ENCODE measurements at regions of chr12 and their contacts with region 1.

Region 1: GRCh38 chr12:62603061-62603810 is 136.6 kb downstream of the MON2 start:
- DNase-seq: peak; percentile 72
- H3K4me3 ChIP-seq: peak overlapping the region; percentile 91
- H3K27ac ChIP-seq: peak overlapping the region; percentile 100
- H3K27me3 ChIP-seq: no peaks in the 10 kb centered on the region
- CTCF ChIP-seq: peak; percentile 56

Region 2: GRCh38 chr12:62466594-62467491 is 136.4 kb before region 1 on chr12 and contains the start of gene MON2:
- CTCF ChIA-PET with region 1: no interaction called
- POLR2A ChIA-PET with region 1: interaction called, 11 read pairs
- DNase-seq: peak; percentile 29
- H3K4me3 ChIP-seq: peak within 1 kb of the TSS; percentile 99
- H3K27ac ChIP-seq: peak within 1 kb of the TSS; percentile 86
- H3K27me3 ChIP-seq: no peaks in the 10 kb centered on the region
- CTCF ChIP-seq: no peak
- polyA plus RNA-seq, gene MON2: 24.2 and 25.4 TPM in 2 replicates

Region 3: GRCh38 chr12:62581288-62582064 is 21.8 kb before region 1 on chr12:
- CTCF ChIA-PET with region 1: interaction called, 11 read pairs
- POLR2A ChIA-PET with region 1: interaction called, 7 read pairs
- DNase-seq: peak; percentile 20
- H3K4me3 ChIP-seq: no peak overlapping the region
- H3K27ac ChIP-seq: no peak overlapping the region
- H3K27me3 ChIP-seq: no peaks in the 10 kb centered on the region
- CTCF ChIP-seq: peak; percentile 77

Region 4: DNA sequence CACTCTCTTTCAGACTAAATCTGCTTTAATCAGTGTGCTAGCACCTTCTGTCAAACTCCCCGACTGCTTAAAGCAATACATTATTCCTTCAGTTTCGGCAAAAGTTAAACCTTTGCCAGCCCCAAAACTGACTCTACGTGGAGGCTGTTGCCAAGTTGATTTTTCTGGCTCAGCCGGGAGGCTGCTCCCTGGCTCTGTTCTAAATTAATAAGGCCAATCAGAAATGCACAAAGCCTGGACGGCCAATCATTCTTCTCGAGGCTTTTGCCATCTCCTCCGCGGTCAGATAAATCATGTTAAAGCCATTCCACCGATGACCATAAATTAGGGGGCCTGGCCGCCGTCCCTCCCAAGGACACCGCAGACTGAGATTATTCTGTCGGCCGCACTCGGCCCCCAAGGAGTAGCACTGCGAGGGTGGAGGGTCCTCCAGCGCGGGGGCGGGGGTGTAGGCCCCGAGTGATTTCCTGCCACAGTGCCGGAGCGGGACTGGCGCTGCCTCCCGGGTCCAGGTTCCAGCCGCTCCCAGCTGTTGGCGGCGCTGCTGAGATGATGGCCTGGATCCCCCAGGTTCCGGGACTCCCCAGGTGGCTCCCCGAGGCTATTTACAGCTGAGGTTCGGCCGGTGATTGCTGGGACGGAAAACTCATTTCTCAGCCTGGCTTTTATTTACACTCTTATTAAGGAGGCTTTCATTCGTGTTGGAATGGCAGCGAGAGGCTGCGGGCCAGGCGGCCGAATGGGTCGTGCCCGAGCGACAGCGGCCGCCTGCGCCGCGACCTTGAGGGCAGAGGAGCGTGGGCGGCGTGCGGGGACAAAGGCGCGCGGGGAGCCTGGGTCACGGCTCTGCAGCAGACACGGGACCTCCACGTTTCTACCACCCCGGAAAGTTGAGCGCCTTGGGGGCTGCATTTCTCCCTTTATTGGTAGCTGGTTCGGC is 28.5 kb after region 1 on chr12:
- CTCF ChIA-PET with region 1: no interaction called
- POLR2A ChIA-PET with region 1: interaction called, 12 read pairs
- DNase-seq: peak; percentile 21
- H3K4me3 ChIP-seq: peak overlapping the region; percentile 62
- H3K27ac ChIP-seq: no peak overlapping the region
- H3K27me3 ChIP-seq: peaks cover 2% of the 10 kb centered on the region
- CTCF ChIP-seq: peak; percentile 40

Region 5: DNA sequence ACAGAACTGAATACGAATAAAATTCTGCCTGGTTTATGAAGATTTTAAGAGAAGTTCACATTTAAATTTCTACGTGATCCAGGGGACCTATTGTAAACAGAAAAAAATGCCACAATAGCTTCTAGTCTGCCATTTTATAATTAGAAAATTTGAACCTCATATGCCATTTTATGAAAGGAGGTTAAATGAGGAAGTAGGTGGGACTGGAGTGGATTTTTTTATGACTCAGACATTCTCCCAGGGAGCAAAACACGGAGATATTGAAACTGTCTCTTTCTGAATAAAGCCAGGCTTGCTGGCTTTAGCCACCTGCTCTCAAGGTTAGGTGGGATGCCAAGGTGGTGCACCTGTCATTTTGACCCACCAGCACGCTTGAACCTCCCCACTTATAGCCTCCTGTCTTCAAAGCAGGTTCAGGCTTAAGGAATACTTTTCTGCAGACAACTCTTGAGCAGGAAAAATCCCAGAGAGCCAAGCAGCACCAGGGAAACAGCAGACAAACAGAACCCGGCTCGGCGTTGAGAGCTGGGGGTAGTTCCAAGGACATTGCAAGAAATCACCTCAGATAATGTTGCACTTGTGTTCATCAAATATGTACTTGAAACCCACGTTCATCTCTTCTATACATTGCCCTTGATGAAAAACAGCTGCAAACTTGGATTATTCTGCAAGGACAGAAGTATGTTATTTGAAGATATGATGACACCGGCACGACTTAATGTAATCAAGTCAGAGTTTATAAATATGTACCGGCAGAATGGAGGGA is 128.0 kb after region 1 on chr12:
- CTCF ChIA-PET with region 1: no interaction called
- POLR2A ChIA-PET with region 1: interaction called, 12 read pairs
- DNase-seq: no peak
- H3K4me3 ChIP-seq: peak overlapping the region; percentile 39
- H3K27ac ChIP-seq: peak overlapping the region; percentile 71
- H3K27me3 ChIP-seq: no peaks in the 10 kb centered on the region
- CTCF ChIP-seq: no peak

Region 6: DNA sequence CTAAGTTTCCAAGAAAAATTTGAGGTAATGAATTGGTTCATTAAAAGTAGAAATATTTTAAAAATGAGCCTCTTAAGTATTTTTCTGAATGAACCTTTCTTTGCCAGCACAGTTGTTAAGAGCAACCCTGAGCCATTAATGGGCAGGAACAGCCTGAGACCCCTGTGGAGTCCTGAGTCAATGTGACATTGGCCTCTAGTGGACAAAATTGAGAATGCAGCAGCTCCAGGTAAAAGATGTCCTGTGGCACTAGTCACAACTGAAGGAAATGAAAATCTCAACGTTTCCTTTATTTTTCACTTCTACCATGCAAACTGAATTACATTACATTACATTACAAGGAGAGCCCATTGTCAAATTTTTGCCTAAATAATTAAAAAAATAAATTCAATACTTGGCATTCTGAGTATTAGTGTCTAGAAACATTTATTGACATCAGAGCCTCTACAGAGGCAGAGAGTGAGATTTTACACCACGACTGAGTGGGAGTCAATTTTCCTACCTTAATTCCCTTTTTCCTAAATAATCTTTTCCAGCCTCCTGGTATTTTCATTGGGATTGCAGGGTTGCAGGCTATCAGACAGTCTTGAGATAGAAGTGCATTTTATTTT is 196.0 kb after region 1 on chr12:
- CTCF ChIA-PET with region 1: interaction called, 72 read pairs
- POLR2A ChIA-PET with region 1: interaction called, 18 read pairs
- DNase-seq: peak; percentile 43
- H3K4me3 ChIP-seq: no peak overlapping the region
- H3K27ac ChIP-seq: no peak overlapping the region
- H3K27me3 ChIP-seq: peaks cover 2% of the 10 kb centered on the region
- CTCF ChIP-seq: peak; percentile 98

Measured in AG04450 (cell line).